A549 (cell line): ENCODE measurements at regions of chr4 and their contacts with region 1.

Region 1: DNA sequence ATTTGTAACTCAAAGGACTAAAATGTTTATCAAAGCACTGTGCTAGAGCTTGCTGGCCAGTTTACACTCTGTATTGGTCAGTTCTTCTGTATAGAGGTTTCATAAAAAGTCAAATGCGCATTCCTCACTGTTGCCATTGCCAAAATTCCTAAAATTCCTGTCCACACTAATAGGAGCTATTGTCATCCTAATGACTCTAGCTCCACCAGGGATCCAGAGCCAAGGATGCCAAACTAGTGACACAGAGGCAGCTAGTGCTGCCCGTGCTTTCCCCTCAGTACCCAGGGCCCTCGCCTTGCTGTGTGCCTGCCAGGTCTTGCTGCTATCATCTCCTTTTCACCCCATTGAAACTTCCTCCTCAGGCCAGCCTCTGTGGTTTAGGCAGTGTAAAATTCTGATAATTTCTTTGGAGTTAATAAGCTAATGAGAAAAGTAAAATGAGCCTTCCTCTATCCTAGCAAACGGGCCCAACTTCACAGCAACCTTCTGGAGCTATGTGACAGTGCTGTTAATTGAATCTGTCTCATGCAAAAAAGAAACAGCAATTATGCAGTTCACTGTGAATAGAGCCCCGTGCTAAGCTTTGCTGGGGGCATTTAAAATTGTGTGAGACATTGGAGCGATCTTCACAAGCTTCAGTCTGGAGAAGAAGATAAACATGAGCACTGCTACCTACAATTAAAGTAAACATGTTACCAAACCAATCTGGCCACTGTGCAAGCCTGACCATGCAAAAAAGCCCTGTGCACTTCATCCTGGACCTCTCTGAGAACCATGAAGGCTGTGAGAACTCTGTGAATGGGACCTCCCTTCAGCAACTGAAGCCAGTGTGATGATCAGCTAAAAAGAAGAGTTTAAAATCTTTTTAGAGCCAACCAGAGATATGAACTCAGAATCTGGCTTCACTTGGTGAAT is 43.1 kb upstream of the FGF2 start:
- DNase-seq: peak; percentile 70 to 76
- ATAC-seq: peak; percentile 99 to 100
- H3K4me3 ChIP-seq: peak overlapping the region; percentile 12; the same call in 1 of the 3 replicates
- H3K27ac ChIP-seq: peak overlapping the region; percentile 87 to 89
- H3K4me1 ChIP-seq: peaks cover 43% of the 10 kb centered on the region
- CTCF ChIP-seq: no peak
- EP300 ChIP-seq: peak; percentile 13 to 60; a peak in 3 of 5 replicates
- POLR2A ChIP-seq: no peak
- RAD21 ChIP-seq: peak in 1 of 2 experiments; percentile 36; a peak in 1 of 5 replicates

Region 2: DNA sequence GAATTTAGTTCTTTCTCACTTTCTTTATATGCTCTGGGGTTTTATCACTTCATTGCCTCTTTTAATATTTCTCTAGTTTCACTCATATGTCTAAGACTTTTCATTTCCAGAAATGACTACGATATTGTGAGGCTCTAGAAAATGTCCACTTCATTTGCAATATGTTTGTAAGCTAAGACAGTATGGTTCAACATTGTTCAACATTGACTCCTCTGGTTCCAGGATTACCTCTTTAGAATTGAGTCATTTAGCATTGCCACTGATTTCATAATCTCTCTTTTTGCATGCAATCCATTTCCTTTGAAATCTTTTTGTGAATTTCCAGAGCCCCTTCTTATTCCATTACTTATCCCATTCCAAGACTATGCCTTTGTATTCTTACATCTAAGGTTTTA is 18.7 kb before region 1 on chr4:
- CTCF ChIA-PET with region 1: interaction called, 3 read pairs
- POLR2A ChIA-PET with region 1: interaction called, 12 read pairs
- DNase-seq: peak in 1 of 2 experiments; percentile 47
- ATAC-seq: peak; percentile 72 to 83; a peak in 5 of 6 replicates
- H3K4me3 ChIP-seq: 0 out of 3 replicates have a peak overlapping the region, but pooled peaks have one; percentile 16
- H3K27ac ChIP-seq: peak overlapping the region; percentile 81 to 85
- H3K4me1 ChIP-seq: peaks cover 63% of the 10 kb centered on the region
- CTCF ChIP-seq: no peak
- EP300 ChIP-seq: peak; percentile 33 to 67; a peak in 2 of 5 replicates
- POLR2A ChIP-seq: no peak
- RAD21 ChIP-seq: no peak; a peak in 1 of 5 replicates

Region 3: DNA sequence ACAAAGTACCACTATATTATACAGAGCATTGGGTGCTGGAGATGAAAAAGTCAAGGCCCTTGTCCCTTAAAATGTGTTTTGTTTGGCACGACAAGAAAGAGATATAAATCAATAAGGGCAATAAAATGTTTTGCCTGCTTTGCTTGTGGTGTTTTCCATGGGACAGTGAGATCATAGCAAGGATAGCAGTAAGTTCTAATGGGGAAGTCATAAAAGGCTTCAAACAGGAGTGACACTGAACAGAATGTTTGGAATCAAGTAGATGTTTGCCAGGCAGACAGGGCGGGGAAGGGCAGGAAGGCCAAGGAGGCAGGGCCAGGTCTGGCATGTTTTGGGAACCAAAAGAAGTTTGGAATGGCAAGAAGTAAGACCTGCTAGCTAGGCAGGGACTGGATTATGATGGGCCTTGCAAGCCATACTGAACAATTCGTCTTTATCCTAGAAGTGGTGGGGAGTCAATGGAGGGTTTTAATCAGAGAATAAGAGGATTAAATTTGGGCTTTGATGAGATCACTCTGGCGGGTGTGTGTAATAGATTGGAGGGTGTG is 59.5 kb after region 1 on chr4:
- CTCF ChIA-PET with region 1: no interaction called
- POLR2A ChIA-PET with region 1: no interaction called
- DNase-seq: peak in 1 of 2 experiments; percentile 51
- ATAC-seq: peak in 1 of 2 experiments; percentile 70; a peak in 3 of 6 replicates
- H3K4me3 ChIP-seq: no peak overlapping the region
- H3K27ac ChIP-seq: peak overlapping the region in 1 of 2 experiments; percentile 64; a peak in 4 of 6 replicates
- H3K4me1 ChIP-seq: peaks cover 78% of the 10 kb centered on the region
- CTCF ChIP-seq: no peak
- EP300 ChIP-seq: no peak
- POLR2A ChIP-seq: no peak
- RAD21 ChIP-seq: no peak

Region 4: GRCh38 chr4:122992057-122992456 is 208.5 kb after region 1 on chr4:
- CTCF ChIA-PET with region 1: no interaction called
- POLR2A ChIA-PET with region 1: no interaction called
- DNase-seq: no peak
- ATAC-seq: no peak
- H3K4me3 ChIP-seq: no peak overlapping the region
- H3K27ac ChIP-seq: no peak overlapping the region
- H3K4me1 ChIP-seq: peaks cover 9% of the 10 kb centered on the region; the same call in 2 of the 3 replicates
- CTCF ChIP-seq: no peak
- EP300 ChIP-seq: no peak
- POLR2A ChIP-seq: no peak
- RAD21 ChIP-seq: no peak

Region 5: GRCh38 chr4:123259676-123260646 is 476.4 kb after region 1 on chr4:
- CTCF ChIA-PET with region 1: no interaction called
- POLR2A ChIA-PET with region 1: no interaction called
- DNase-seq: no peak
- ATAC-seq: no peak
- H3K4me3 ChIP-seq: no peak overlapping the region
- H3K27ac ChIP-seq: no peak overlapping the region
- H3K4me1 ChIP-seq: no peaks in the 10 kb centered on the region
- CTCF ChIP-seq: no peak
- EP300 ChIP-seq: no peak
- POLR2A ChIP-seq: no peak
- RAD21 ChIP-seq: no peak